ENCODE measurements at regions of chrX and their contacts with region 1.

Region 1: GRCh38 chrX:13506574-13506973 is 62.8 kb upstream of the EGFL6 start:
- DNase-seq: peak; percentile 15
- H3K4me3 ChIP-seq: no peak overlapping the region
- H3K27ac ChIP-seq: no peak overlapping the region
- H3K4me1 ChIP-seq: no peaks in the 10 kb centered on the region
- H3K27me3 ChIP-seq: no peaks in the 10 kb centered on the region
- CTCF ChIP-seq: peak; percentile 77

Region 2: DNA sequence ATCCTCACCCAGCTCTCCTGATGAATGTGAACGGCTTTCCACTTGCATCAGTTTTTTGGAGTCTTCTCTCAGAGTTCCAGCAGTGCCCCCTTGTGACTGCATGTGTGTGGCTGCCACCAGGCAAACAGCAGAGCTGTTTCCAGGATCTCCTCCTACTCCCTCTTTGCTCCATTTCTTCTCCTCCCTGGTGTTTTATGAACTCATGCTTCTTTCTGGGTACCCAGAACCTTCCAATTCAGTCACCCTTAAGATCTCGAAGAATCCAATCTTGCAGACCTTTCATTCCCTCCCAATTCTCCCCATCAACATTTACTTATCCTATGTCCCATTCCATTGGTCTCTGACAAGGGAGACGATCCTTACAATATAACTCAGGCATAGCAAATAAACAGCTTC is 139.6 kb after region 1 on chrX:
- intact Hi-C with region 1: loop called (anchors 5 kb)
- DNase-seq: peak; percentile 39
- H3K4me3 ChIP-seq: no peak overlapping the region
- H3K27ac ChIP-seq: no peak overlapping the region
- H3K4me1 ChIP-seq: peaks cover 9% of the 10 kb centered on the region
- H3K27me3 ChIP-seq: no peaks in the 10 kb centered on the region
- CTCF ChIP-seq: peak; percentile 76

Measured in left ventricle myocardium inferior (tissue), 1 donor.